CD4-positive, alpha-beta T cell (primary cell): ENCODE measurements at regions of chr12 and their contacts with region 1.

Region 1: GRCh38 chr12:92136965-92137721 is 8.5 kb downstream of the BTG1 start:
- DNase-seq: peak in 2 of 14 experiments; percentile 52 to 56
- ATAC-seq: no peak
- H3K4me3 ChIP-seq: peak overlapping the region; percentile 94
- H3K4me3 Mint-ChIP-seq: peak overlapping the region; percentile 100
- H3K27ac ChIP-seq: peak overlapping the region; percentile 29 to 62
- H3K27ac Mint-ChIP-seq: peak overlapping the region; percentile 99
- H3K4me1 ChIP-seq: peaks cover 31% of the 10 kb centered on the region
- H3K4me1 Mint-ChIP-seq: peaks cover 55% of the 10 kb centered on the region
- H3K27me3 ChIP-seq: no peaks in the 10 kb centered on the region
- H3K27me3 Mint-ChIP-seq: no peaks in the 10 kb centered on the region
- CTCF ChIP-seq: no peak

Region 2: GRCh38 chr12:91432089-91432488 is 705.1 kb before region 1 on chr12:
- CTCF ChIA-PET with region 1: no interaction called
- POLR2A ChIA-PET with region 1: no interaction called
- intact Hi-C with region 1: no loop called
- DNase-seq: peak in 1 of 14 experiments; percentile 4
- ATAC-seq: no peak
- H3K4me3 ChIP-seq: no peak overlapping the region
- H3K4me3 Mint-ChIP-seq: no peak overlapping the region
- H3K27ac ChIP-seq: no peak overlapping the region
- H3K27ac Mint-ChIP-seq: no peak overlapping the region
- H3K4me1 ChIP-seq: no peaks in the 10 kb centered on the region
- H3K4me1 Mint-ChIP-seq: no peaks in the 10 kb centered on the region
- H3K27me3 ChIP-seq: no peaks in the 10 kb centered on the region
- H3K27me3 Mint-ChIP-seq: no peaks in the 10 kb centered on the region
- CTCF ChIP-seq: no peak

Region 3: GRCh38 chr12:91811481-91812287 is 325.5 kb before region 1 on chr12:
- CTCF ChIA-PET with region 1: interaction called, 8 read pairs
- POLR2A ChIA-PET with region 1: interaction called, 14 read pairs
- intact Hi-C with region 1: loop called (anchors 2 kb)
- DNase-seq: peak; percentile 58 to 90 (median 78)
- ATAC-seq: peak; percentile 86
- H3K4me3 ChIP-seq: no peak overlapping the region
- H3K4me3 Mint-ChIP-seq: no peak overlapping the region
- H3K27ac ChIP-seq: no peak overlapping the region
- H3K27ac Mint-ChIP-seq: peak overlapping the region; percentile 64
- H3K4me1 ChIP-seq: peaks cover 2% of the 10 kb centered on the region
- H3K4me1 Mint-ChIP-seq: peaks cover 26% of the 10 kb centered on the region
- H3K27me3 ChIP-seq: no peaks in the 10 kb centered on the region
- H3K27me3 Mint-ChIP-seq: no peaks in the 10 kb centered on the region
- CTCF ChIP-seq: peak; percentile 87

Region 4: GRCh38 chr12:92007787-92008186 is 129.4 kb before region 1 on chr12:
- CTCF ChIA-PET with region 1: no interaction called
- POLR2A ChIA-PET with region 1: interaction called, 35 read pairs
- intact Hi-C with region 1: no loop called
- DNase-seq: peak in 2 of 14 experiments; percentile 32 to 34
- ATAC-seq: peak; percentile 35
- H3K4me3 ChIP-seq: no peak overlapping the region
- H3K4me3 Mint-ChIP-seq: no peak overlapping the region
- H3K27ac ChIP-seq: no peak overlapping the region
- H3K27ac Mint-ChIP-seq: peak overlapping the region; percentile 12
- H3K4me1 ChIP-seq: peaks cover 12% of the 10 kb centered on the region
- H3K4me1 Mint-ChIP-seq: peaks cover 91% of the 10 kb centered on the region
- H3K27me3 ChIP-seq: no peaks in the 10 kb centered on the region
- H3K27me3 Mint-ChIP-seq: no peaks in the 10 kb centered on the region
- CTCF ChIP-seq: no peak

Region 5: GRCh38 chr12:92049403-92049802 is 87.7 kb before region 1 on chr12:
- CTCF ChIA-PET with region 1: no interaction called
- POLR2A ChIA-PET with region 1: interaction called, 6 read pairs
- intact Hi-C with region 1: loop called in 1 of 2 experiments (anchors 5 kb)
- DNase-seq: no peak
- ATAC-seq: no peak
- H3K4me3 ChIP-seq: no peak overlapping the region
- H3K4me3 Mint-ChIP-seq: no peak overlapping the region
- H3K27ac ChIP-seq: no peak overlapping the region
- H3K27ac Mint-ChIP-seq: peak overlapping the region; percentile 84
- H3K4me1 ChIP-seq: peaks cover 23% of the 10 kb centered on the region
- H3K4me1 Mint-ChIP-seq: peaks cover 65% of the 10 kb centered on the region
- H3K27me3 ChIP-seq: no peaks in the 10 kb centered on the region
- H3K27me3 Mint-ChIP-seq: no peaks in the 10 kb centered on the region
- CTCF ChIP-seq: no peak

Region 6: GRCh38 chr12:92114834-92115233 is 22.3 kb before region 1 on chr12:
- CTCF ChIA-PET with region 1: no interaction called
- POLR2A ChIA-PET with region 1: interaction called, 12 read pairs
- intact Hi-C with region 1: loop called in 1 of 2 experiments (anchors 2 kb)
- DNase-seq: no peak
- ATAC-seq: no peak
- H3K4me3 ChIP-seq: no peak overlapping the region
- H3K4me3 Mint-ChIP-seq: peak overlapping the region; percentile 70
- H3K27ac ChIP-seq: no peak overlapping the region
- H3K27ac Mint-ChIP-seq: peak overlapping the region; percentile 61
- H3K4me1 ChIP-seq: peaks cover 6% of the 10 kb centered on the region
- H3K4me1 Mint-ChIP-seq: peaks cover 68% of the 10 kb centered on the region
- H3K27me3 ChIP-seq: no peaks in the 10 kb centered on the region
- H3K27me3 Mint-ChIP-seq: no peaks in the 10 kb centered on the region
- CTCF ChIP-seq: no peak